ENCODE measurements at regions of chr4 and their contacts with region 1.

Region 1: GRCh38 chr4:75499900-75500299 is 14.3 kb downstream of the RCHY1 start:
- DNase-seq: no peak
- ATAC-seq: no peak
- H3K4me3 Mint-ChIP-seq: no peak overlapping the region
- H3K27ac Mint-ChIP-seq: no peak overlapping the region
- H3K4me1 Mint-ChIP-seq: peaks cover 31% of the 10 kb centered on the region
- H3K27me3 Mint-ChIP-seq: no peaks in the 10 kb centered on the region
- CTCF ChIP-seq: no peak

Region 2: GRCh38 chr4:75484190-75484589 is 15.7 kb before region 1 on chr4:
- CTCF ChIA-PET with region 1: interaction called, 10 read pairs
- POLR2A ChIA-PET with region 1: no interaction called
- intact Hi-C with region 1: no loop called
- DNase-seq: no peak
- ATAC-seq: no peak
- H3K4me3 Mint-ChIP-seq: no peak overlapping the region
- H3K27ac Mint-ChIP-seq: no peak overlapping the region
- H3K4me1 Mint-ChIP-seq: no peaks in the 10 kb centered on the region
- H3K27me3 Mint-ChIP-seq: no peaks in the 10 kb centered on the region
- CTCF ChIP-seq: no peak

Region 3: GRCh38 chr4:75849461-75849860 is 349.6 kb after region 1 on chr4:
- CTCF ChIA-PET with region 1: no interaction called
- POLR2A ChIA-PET with region 1: no interaction called
- intact Hi-C with region 1: no loop called
- DNase-seq: peak; percentile 5
- ATAC-seq: no peak
- H3K4me3 Mint-ChIP-seq: no peak overlapping the region
- H3K27ac Mint-ChIP-seq: no peak overlapping the region
- H3K4me1 Mint-ChIP-seq: peaks cover 12% of the 10 kb centered on the region
- H3K27me3 Mint-ChIP-seq: peaks cover 9% of the 10 kb centered on the region
- CTCF ChIP-seq: no peak

Measured in activated CD8-positive, alpha-beta T cell treated with anti-CD3 and anti-CD28 coated beads for 36 hours (primary cell).